PC-9 (cell line): ENCODE measurements at regions of chr6 and their contacts with region 1.

Region 1: DNA sequence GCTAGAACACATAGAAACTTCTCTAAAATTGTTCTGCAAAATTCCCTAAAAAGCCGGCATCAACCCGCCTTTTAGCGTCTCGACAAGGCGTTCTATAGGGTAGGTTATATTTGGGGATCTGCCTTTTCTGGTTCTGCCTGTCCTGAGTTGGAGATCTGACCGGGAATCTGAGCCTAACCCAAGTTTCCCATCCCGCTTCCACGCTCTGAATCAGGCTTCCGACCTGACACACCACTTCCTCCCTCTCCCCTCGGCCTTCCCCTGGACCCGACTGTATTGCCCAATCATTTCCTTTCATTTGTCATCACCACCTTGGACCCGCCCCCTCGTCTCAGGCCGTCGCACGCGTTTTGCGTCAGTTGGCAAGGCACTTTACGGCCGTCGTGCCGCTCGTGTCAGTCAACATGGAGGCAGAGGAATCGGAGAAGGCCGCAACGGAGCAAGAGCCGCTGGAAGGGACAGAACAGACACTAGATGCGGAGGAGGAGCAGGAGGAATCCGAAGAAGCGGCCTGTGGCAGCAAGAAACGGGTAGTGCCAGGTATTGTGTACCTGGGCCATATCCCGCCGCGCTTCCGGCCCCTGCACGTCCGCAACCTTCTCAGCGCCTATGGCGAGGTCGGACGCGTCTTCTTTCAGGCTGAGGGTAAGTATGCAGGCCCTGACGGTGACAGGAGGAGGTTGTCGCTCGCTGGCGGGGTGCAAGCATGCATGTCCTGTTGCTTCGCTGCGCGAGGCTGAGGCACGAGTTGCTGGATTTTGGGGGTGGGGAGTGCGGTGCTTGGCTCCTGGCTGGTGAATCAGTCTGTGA is at the start of gene ABT1:
- DNase-seq: peak; percentile 94 to 98
- H3K4me3 ChIP-seq: peak within 1 kb of the TSS; percentile 91
- H3K27ac ChIP-seq: peak within 1 kb of the TSS; percentile 48
- H3K4me1 ChIP-seq: 0 out of 2 replicates have a peak, but pooled peaks cover 8% of the 10 kb centered on the region
- H3K27me3 ChIP-seq: no peaks in the 10 kb centered on the region
- CTCF ChIP-seq: no peak
- total RNA-seq, gene ABT1: 16.8 and 19.5 TPM in 2 replicates

Region 2: DNA sequence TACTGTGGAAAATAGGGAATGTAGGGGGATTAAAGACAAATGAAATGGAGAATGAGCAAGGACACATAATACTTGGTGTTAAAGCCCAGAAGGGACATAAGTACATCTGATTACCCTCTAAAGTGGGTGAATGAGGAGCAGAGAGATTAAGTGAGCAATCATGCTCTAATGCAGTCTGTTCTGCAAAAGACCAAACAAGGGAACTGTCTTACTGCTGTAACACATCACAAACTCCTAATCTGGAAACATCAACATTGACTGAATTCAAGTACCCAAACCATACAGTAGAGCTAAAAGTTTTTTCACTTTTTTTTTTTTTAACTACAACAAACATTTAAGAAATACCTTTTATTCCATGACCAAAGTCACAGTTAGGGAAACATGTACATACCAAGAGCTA is 861.5 kb before region 1 on chr6:
- CTCF ChIA-PET with region 1: interaction called, 10 read pairs
- POLR2A ChIA-PET with region 1: no interaction called
- intact Hi-C with region 1: no loop called
- DNase-seq: no peak
- H3K4me3 ChIP-seq: no peak overlapping the region
- H3K27ac ChIP-seq: no peak overlapping the region
- H3K4me1 ChIP-seq: no peaks in the 10 kb centered on the region
- H3K27me3 ChIP-seq: peaks cover 2% of the 10 kb centered on the region; the same call in 1 of the 2 replicates
- CTCF ChIP-seq: no peak

Region 3: GRCh38 chr6:26129656-26130055 is 467.1 kb before region 1 on chr6:
- CTCF ChIA-PET with region 1: no interaction called
- POLR2A ChIA-PET with region 1: interaction called, 14 read pairs
- intact Hi-C with region 1: no loop called
- DNase-seq: no peak
- H3K4me3 ChIP-seq: no peak overlapping the region
- H3K27ac ChIP-seq: no peak overlapping the region
- H3K4me1 ChIP-seq: peaks cover 38% of the 10 kb centered on the region
- H3K27me3 ChIP-seq: no peaks in the 10 kb centered on the region
- CTCF ChIP-seq: no peak

Region 4: GRCh38 chr6:26223650-26224546 is 372.9 kb before region 1 on chr6:
- CTCF ChIA-PET with region 1: no interaction called
- POLR2A ChIA-PET with region 1: interaction called, 8 read pairs
- intact Hi-C with region 1: loop called (anchors 5 kb)
- DNase-seq: peak; percentile 71 to 96
- H3K4me3 ChIP-seq: peak overlapping the region; percentile 96
- H3K27ac ChIP-seq: peak overlapping the region; percentile 96
- H3K4me1 ChIP-seq: peaks cover 18% of the 10 kb centered on the region
- H3K27me3 ChIP-seq: no peaks in the 10 kb centered on the region
- CTCF ChIP-seq: no peak

Region 5: GRCh38 chr6:26342106-26343004 is 254.4 kb before region 1 on chr6:
- CTCF ChIA-PET with region 1: interaction called, 14 read pairs
- POLR2A ChIA-PET with region 1: no interaction called
- intact Hi-C with region 1: loop called (anchors 1 kb)
- DNase-seq: no peak
- H3K4me3 ChIP-seq: no peak overlapping the region
- H3K27ac ChIP-seq: no peak overlapping the region
- H3K4me1 ChIP-seq: peaks cover under 1% of the 10 kb centered on the region; the same call in 1 of the 2 replicates
- H3K27me3 ChIP-seq: no peaks in the 10 kb centered on the region
- CTCF ChIP-seq: no peak

Region 6: DNA sequence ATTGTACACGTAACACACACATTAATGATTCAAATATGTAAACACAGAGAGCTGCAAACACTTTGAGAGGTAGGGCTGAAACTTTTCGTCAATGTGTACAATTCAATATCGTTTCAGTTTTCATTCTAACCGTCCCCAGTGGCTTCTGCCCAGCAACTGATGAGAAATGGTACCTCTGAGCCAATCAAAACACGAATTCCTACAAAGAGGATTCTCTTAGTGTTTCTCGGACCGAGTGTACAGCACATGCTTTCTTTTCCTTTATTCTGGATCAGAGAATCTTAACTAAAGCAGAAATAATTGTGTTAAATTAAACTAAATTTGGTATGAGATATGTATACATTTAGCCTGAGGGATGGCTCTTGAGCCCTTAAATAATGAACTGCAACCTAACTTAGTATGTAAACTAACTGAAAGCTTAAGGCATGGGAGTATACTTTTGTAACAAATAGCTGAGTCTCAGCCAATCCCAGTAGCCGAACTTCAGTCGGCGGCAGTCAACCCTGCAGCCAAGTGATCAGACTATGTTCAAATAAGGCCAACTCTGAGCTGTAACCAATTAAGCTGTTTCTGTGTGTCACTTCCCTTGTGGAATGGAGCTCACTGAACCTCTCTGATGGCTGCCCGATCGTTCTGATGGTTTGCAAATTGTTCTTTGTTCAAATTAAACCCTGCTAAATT is 122.9 kb before region 1 on chr6:
- CTCF ChIA-PET with region 1: no interaction called
- POLR2A ChIA-PET with region 1: no interaction called
- intact Hi-C with region 1: no loop called
- DNase-seq: peak; percentile 75 to 88
- H3K4me3 ChIP-seq: peak overlapping the region; percentile 62
- H3K27ac ChIP-seq: peak overlapping the region; percentile 76
- H3K4me1 ChIP-seq: peaks cover 29% of the 10 kb centered on the region
- H3K27me3 ChIP-seq: no peaks in the 10 kb centered on the region
- CTCF ChIP-seq: no peak

Region 7: GRCh38 chr6:26568601-26569432 is 28.0 kb before region 1 on chr6:
- CTCF ChIA-PET with region 1: interaction called, 22 read pairs
- POLR2A ChIA-PET with region 1: interaction called, 3 read pairs
- intact Hi-C with region 1: loop called (anchors 1 kb)
- DNase-seq: peak; percentile 90 to 97
- H3K4me3 ChIP-seq: peak overlapping the region; percentile 59
- H3K27ac ChIP-seq: no peak overlapping the region
- H3K4me1 ChIP-seq: no peaks in the 10 kb centered on the region
- H3K27me3 ChIP-seq: no peaks in the 10 kb centered on the region
- CTCF ChIP-seq: peak; percentile 13; the same call in 1 of the 2 replicates